ENCODE measurements at regions of chr18 and their contacts with region 1.

Region 1: DNA sequence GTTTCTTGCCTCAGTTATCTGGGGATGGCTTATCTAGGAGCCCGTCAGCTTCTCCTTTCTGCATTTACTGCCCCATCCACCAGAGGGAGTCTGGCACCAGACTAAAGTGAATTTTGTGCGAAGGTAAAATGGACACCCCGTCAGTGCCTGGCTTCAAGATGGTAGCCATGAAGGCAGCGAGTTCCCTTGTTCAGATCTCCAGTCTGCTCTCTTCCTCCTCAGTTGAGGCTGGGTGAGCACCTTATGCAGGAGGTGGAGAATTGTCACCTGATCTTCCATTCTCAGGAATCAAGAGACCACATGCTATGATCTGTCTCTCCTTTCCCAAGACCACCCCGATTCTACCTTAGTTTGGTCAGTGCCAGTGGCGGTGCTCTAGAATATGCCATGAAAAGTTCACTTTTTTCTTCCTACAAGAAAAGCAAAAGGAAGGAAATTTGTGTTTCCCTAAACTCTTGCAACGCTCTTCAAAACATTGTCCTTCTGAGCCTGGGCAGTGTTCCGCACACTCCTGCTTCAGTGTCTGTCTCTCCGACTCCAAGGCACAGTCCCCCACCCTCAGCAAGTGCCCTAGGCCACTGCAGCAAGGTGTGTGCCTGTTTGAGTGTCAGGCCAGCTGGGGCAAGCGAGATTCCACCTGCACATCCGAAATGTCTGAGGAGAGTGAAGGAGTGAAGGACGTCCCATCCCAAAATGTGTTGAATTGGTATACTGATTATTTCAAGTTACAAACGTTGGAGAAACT is 168.6 kb downstream of the SS18 start:
- DNase-seq: peak; percentile 20
- ATAC-seq: peak; percentile 72
- H3K4me3 ChIP-seq: no peak overlapping the region
- H3K27ac ChIP-seq: no peak overlapping the region
- H3K4me1 ChIP-seq: no peaks in the 10 kb centered on the region
- H3K27me3 ChIP-seq: peaks cover under 1% of the 10 kb centered on the region
- CTCF ChIP-seq: peak; percentile 47
- POLR2A ChIP-seq: no peak
- RAD21 ChIP-seq: peak; percentile 55

Region 2: DNA sequence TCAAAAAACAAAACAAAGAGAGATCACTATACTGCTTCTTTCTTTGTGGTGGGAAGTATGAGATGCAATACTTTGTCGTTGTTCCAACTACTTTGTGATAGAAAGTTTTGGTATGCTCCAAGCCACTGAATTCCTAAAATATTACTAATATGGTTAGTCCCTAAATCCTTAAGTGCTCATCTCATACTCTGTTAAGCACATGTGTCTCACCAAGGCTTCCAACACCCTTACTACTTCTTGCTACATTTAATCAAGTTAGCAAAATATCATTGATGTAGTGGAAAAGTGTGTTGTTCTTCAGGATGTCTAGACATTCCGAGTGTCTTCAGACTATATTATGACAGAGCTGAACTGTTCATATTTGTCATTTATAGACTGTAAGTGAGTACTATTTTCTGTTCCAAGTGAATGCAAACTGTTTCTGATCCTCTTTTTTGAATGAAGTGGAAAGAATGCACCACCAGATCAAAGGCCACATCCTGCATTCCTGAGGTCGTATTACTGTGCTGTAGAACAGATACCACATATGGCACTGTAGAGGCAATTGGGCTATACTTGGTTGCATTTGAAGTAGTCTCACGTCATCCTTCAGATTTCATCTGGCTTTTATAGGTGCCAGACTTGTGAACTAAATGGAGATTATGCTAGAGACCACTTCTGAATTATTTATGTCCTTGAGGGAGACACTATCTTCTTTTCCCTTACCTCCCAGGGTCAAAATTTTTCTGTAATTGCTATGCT is 271.5 kb before region 1 on chr18:
- CTCF ChIA-PET with region 1: no interaction called
- POLR2A ChIA-PET with region 1: no interaction called
- dilution Hi-C with region 1: no loop called
- in situ Hi-C with region 1: no loop called
- intact Hi-C with region 1: no loop called
- DNase-seq: peak; percentile 97
- ATAC-seq: peak; percentile 87
- H3K4me3 ChIP-seq: no peak overlapping the region
- H3K27ac ChIP-seq: peak overlapping the region; percentile 79
- H3K4me1 ChIP-seq: peaks cover 10% of the 10 kb centered on the region
- H3K27me3 ChIP-seq: no peaks in the 10 kb centered on the region
- CTCF ChIP-seq: no peak
- POLR2A ChIP-seq: no peak
- RAD21 ChIP-seq: no peak

Region 3: DNA sequence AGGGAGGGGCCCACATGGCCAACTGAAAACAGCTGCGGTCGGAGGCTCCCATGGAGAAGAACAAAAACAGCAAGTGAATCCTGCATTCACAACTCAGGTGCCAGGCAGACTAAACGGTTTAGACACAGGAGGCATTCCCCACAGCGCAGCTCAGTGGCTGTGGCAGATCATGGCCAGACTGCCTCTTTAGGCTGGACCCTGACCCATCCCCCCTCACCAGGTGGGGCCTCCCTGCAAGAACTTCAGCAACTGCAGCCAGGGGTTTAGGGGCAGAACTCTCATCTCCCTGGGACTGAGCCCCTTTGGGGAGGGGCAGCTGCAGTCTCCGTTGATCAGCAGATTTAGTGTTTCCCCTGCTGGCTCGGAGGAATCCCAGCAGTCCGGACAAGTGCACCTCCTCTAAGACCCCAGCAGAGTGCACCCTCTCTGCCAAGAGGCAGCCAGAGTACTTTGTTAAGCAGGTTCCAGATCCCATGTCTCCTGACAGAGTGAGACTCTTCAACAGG is 178.2 kb before region 1 on chr18:
- CTCF ChIA-PET with region 1: no interaction called
- POLR2A ChIA-PET with region 1: no interaction called
- dilution Hi-C with region 1: no loop called
- in situ Hi-C with region 1: no loop called
- intact Hi-C with region 1: no loop called
- DNase-seq: no peak
- ATAC-seq: no peak
- H3K4me3 ChIP-seq: no peak overlapping the region
- H3K27ac ChIP-seq: no peak overlapping the region
- H3K4me1 ChIP-seq: no peaks in the 10 kb centered on the region
- H3K27me3 ChIP-seq: no peaks in the 10 kb centered on the region
- CTCF ChIP-seq: no peak
- POLR2A ChIP-seq: no peak
- RAD21 ChIP-seq: no peak

Region 4: GRCh38 chr18:26121476-26121875 is 199.6 kb after region 1 on chr18:
- CTCF ChIA-PET with region 1: no interaction called
- POLR2A ChIA-PET with region 1: no interaction called
- dilution Hi-C with region 1: no loop called
- in situ Hi-C with region 1: no loop called
- intact Hi-C with region 1: loop called (anchors 10 kb)
- DNase-seq: peak; percentile 1
- ATAC-seq: no peak
- H3K4me3 ChIP-seq: no peak overlapping the region
- H3K27ac ChIP-seq: no peak overlapping the region
- H3K4me1 ChIP-seq: no peaks in the 10 kb centered on the region
- H3K27me3 ChIP-seq: no peaks in the 10 kb centered on the region
- CTCF ChIP-seq: no peak
- POLR2A ChIP-seq: no peak
- RAD21 ChIP-seq: no peak

Region 5: DNA sequence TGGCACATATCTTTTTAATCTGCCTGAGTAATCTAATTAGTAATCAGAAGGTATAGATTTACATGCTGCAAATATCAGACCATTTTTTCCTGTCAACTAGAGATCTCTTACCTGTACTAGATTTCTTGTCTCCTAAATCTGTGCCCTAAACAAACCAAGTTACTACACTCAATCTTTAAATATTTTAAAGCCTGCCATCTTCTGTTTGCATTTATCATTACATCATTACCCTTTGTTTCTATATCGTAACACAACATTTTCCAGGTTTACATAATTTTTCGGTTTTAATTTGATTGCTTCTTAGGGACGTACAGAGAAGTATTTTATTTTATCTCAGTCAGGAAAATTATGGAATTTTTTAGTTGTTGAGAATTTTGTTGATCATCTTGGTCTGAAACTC is 237.5 kb after region 1 on chr18:
- CTCF ChIA-PET with region 1: no interaction called
- POLR2A ChIA-PET with region 1: no interaction called
- dilution Hi-C with region 1: no loop called
- in situ Hi-C with region 1: no loop called
- intact Hi-C with region 1: loop called (anchors 2 kb)
- DNase-seq: no peak
- ATAC-seq: no peak
- H3K4me3 ChIP-seq: no peak overlapping the region
- H3K27ac ChIP-seq: no peak overlapping the region
- H3K4me1 ChIP-seq: no peaks in the 10 kb centered on the region
- H3K27me3 ChIP-seq: peaks cover 1% of the 10 kb centered on the region; the same call in 1 of the 2 replicates
- CTCF ChIP-seq: no peak
- POLR2A ChIP-seq: no peak
- RAD21 ChIP-seq: no peak